Activated T-helper 1 cell treated with anti-CD3 and anti-CD28 coated beads, Interleukin-12 subunit alpha, Interleukin-12 subunit beta, Interleukin-2, Interleukin-4 antibody, amounts not matched to agents 30 ng/mL and 10 ng/mL and 1 ng/mL, durations not matched to agents 14 hours and 24 hours and 36 hours (primary cell): ENCODE measurements at regions of chr5 and their contacts with region 1.

Region 1: DNA sequence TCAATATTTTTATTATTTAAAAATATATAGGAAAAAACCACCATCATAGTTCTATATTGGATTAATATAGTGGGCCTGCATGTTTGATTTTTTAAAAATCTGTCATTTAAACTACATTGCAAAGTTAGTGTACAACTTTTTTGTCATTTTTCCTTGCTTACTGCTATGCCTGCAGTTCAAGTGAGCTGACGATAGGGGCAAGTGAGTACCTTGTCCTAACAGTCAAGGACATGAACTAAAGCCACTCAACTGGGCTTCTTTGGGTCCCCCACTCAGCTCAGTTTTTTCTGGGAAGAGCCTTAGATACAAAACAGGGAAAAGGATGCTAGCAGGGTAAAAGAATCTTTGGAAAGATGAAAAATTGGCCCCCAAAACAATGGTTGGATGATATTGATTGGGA is 269.9 kb downstream of the MAN2A1 start:
- DNase-seq: no peak
- H3K4me3 Mint-ChIP-seq: no peak overlapping the region
- H3K27ac Mint-ChIP-seq: no peak overlapping the region
- H3K4me1 Mint-ChIP-seq: peaks cover 11% of the 10 kb centered on the region
- H3K27me3 Mint-ChIP-seq: no peaks in the 10 kb centered on the region

Region 2: GRCh38 chr5:108655750-108656450 is 1303.8 kb before region 1 on chr5:
- intact Hi-C with region 1: no loop called
- DNase-seq: no peak
- H3K4me3 Mint-ChIP-seq: no peak overlapping the region
- H3K27ac Mint-ChIP-seq: no peak overlapping the region
- H3K4me1 Mint-ChIP-seq: no peaks in the 10 kb centered on the region
- H3K27me3 Mint-ChIP-seq: peaks cover 11% of the 10 kb centered on the region

Region 3: GRCh38 chr5:109947667-109948066 is 12.0 kb before region 1 on chr5:
- intact Hi-C with region 1: loop called (anchors 2 kb)
- DNase-seq: no peak
- H3K4me3 Mint-ChIP-seq: no peak overlapping the region
- H3K27ac Mint-ChIP-seq: no peak overlapping the region
- H3K4me1 Mint-ChIP-seq: peaks cover 31% of the 10 kb centered on the region
- H3K27me3 Mint-ChIP-seq: no peaks in the 10 kb centered on the region